Activated naive CD4-positive, alpha-beta T cell treated with anti-CD3 and anti-CD28 coated beads, Interleukin-2, amount 10 ng/mL, durations not matched to agents 7 days and 5 days (primary cell): ENCODE measurements at regions of chr14 and their contacts with region 1.

Region 1: DNA sequence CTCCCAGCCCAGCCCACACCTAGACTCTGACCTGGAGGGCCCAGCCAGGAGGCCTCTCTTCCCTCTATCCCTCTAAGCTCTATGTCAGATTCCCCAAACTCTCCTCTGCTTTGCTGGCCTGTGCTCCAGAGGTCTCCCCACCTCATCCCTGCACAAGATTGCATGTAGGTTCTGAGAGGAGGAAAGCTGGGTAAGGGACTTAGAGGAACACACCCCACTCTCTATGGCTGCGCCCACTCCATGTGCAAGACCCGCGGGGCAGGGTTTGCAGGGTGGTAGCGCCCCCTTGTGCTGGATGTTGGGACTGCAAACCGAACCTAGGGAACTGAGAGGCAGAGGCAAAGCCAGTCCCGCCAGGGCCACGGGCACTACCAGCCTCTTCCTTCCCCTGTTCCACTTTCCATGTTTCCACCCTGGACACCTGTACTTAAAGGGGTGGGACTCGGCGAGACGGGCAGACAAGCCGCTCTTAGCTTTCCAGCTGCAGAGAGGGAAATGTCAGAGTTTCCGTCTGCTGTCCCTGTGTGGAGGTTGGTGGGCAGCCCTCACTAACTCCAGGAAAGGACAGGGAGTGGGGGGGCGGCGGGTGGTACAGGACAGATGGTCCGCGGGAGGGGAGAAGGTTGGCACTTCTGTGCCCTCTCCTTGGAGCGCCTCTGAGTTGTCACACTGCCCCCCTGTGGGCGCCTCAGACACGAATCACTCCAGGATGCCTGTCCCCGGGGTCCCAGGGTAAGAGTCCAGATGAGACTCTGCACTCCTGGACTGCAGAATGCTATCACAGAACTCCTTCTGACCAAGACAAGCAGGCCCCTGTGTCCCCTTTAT is 16.8 kb downstream of the MMP14 start:
- DNase-seq: peak; percentile 93
- H3K4me3 Mint-ChIP-seq: peak overlapping the region; percentile 72
- H3K27ac Mint-ChIP-seq: peak overlapping the region; percentile 49
- H3K4me1 Mint-ChIP-seq: peaks cover 39% of the 10 kb centered on the region
- H3K27me3 Mint-ChIP-seq: peaks cover 77% of the 10 kb centered on the region

Region 2: GRCh38 chr14:22556990-22557623 is 296.0 kb before region 1 on chr14:
- CTCF ChIA-PET with region 1: interaction called, 14 read pairs
- DNase-seq: peak; percentile 93
- H3K4me3 Mint-ChIP-seq: peak overlapping the region; percentile 80
- H3K27ac Mint-ChIP-seq: peak overlapping the region; percentile 97
- H3K4me1 Mint-ChIP-seq: peaks cover 92% of the 10 kb centered on the region
- H3K27me3 Mint-ChIP-seq: peaks cover 8% of the 10 kb centered on the region

Region 3: DNA sequence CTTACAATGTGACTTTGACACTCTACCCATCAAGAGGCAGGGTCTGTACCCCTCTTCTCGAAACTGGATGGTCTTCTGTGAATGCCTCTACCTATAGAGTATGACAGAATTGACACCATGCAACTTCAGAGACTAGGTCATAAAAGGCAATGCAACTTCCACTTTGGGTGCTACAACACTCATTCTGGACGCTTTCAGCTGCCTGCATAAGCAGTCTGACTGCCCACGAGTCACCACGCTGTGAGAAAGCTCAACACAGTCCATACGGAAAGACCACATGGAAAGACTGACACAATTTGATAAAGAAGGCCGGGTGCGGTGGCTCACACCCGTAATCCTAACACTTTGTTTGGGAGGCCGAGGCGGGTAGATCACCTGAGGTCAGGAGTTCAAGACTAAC is 52.8 kb before region 1 on chr14:
- CTCF ChIA-PET with region 1: no interaction called
- DNase-seq: no peak
- H3K4me3 Mint-ChIP-seq: no peak overlapping the region
- H3K27ac Mint-ChIP-seq: no peak overlapping the region
- H3K4me1 Mint-ChIP-seq: no peaks in the 10 kb centered on the region
- H3K27me3 Mint-ChIP-seq: peaks cover 52% of the 10 kb centered on the region

Region 4: GRCh38 chr14:22822571-22823098 is 30.5 kb before region 1 on chr14:
- CTCF ChIA-PET with region 1: interaction called, 224 read pairs
- DNase-seq: peak; percentile 77
- H3K4me3 Mint-ChIP-seq: peak overlapping the region; percentile 46
- H3K27ac Mint-ChIP-seq: no peak overlapping the region
- H3K4me1 Mint-ChIP-seq: peaks cover 37% of the 10 kb centered on the region
- H3K27me3 Mint-ChIP-seq: peaks cover 58% of the 10 kb centered on the region

Region 5: GRCh38 chr14:22837114-22837749 is 15.9 kb before region 1 on chr14:
- CTCF ChIA-PET with region 1: interaction called, 36 read pairs
- DNase-seq: no peak
- H3K4me3 Mint-ChIP-seq: peak overlapping the region; percentile 56
- H3K27ac Mint-ChIP-seq: no peak overlapping the region
- H3K4me1 Mint-ChIP-seq: peaks cover 12% of the 10 kb centered on the region
- H3K27me3 Mint-ChIP-seq: peaks cover 56% of the 10 kb centered on the region

Region 6: GRCh38 chr14:22900081-22900799 is 47.1 kb after region 1 on chr14:
- CTCF ChIA-PET with region 1: interaction called, 51 read pairs
- DNase-seq: peak; percentile 65
- H3K4me3 Mint-ChIP-seq: no peak overlapping the region
- H3K27ac Mint-ChIP-seq: no peak overlapping the region
- H3K4me1 Mint-ChIP-seq: peaks cover 19% of the 10 kb centered on the region
- H3K27me3 Mint-ChIP-seq: no peaks in the 10 kb centered on the region

Region 7: GRCh38 chr14:23006544-23007419 is 153.6 kb after region 1 on chr14:
- CTCF ChIA-PET with region 1: no interaction called
- DNase-seq: peak; percentile 98
- H3K4me3 Mint-ChIP-seq: peak overlapping the region; percentile 96
- H3K27ac Mint-ChIP-seq: peak overlapping the region; percentile 98
- H3K4me1 Mint-ChIP-seq: peaks cover 53% of the 10 kb centered on the region
- H3K27me3 Mint-ChIP-seq: no peaks in the 10 kb centered on the region

Region 8: DNA sequence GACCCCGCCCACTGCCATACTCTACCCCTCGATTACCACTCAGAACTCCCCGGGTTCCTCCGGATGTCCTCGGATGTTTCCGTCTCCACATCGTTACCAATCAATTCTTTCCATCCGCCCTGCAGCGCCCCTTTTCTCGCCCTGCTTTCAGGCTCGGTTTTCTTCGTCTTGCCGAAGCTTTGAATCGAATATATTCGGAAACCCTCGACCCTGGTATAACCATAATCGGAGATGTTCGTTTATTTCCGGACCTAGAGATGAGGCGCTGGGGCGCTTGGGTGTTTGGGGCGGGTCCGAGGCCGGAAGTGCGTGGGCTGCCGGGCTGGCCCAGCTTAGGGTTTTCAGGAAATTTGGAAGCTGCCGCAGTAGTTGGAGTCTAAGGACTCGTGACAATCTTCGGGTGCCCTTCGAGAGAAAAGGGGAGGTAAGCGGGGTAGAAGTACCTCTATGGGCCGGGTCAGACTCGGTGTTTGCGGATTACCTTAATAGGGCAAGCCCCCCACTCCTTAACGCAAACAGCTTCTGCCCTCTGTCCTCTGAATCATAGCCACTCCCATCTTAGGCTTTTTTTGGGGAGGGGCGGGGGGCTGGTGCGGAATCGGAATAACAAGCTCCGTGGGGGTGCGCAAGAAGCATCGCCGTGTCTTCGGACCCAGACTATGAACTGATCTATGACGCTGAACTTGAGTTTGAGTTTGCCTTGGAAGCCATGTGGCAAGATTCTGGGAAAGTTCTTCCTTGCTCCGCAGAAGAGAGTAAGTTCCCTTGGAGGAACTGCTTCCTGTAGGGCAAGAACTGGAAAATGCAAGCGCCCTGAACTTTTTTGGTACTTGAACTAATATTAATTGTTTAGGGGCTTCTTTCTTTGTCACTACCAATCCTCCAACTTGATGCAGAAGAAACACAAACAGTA is 242.3 kb after region 1 on chr14 and contains the start of gene C14orf119:
- CTCF ChIA-PET with region 1: no interaction called
- DNase-seq: peak; percentile 100
- H3K4me3 Mint-ChIP-seq: no peak within 1 kb of the TSS
- H3K27ac Mint-ChIP-seq: no peak within 1 kb of the TSS
- H3K4me1 Mint-ChIP-seq: peaks cover 30% of the 10 kb centered on the region
- H3K27me3 Mint-ChIP-seq: no peaks in the 10 kb centered on the region